ENCODE measurements at regions of chr1 and their contacts with region 1.

Region 1: DNA sequence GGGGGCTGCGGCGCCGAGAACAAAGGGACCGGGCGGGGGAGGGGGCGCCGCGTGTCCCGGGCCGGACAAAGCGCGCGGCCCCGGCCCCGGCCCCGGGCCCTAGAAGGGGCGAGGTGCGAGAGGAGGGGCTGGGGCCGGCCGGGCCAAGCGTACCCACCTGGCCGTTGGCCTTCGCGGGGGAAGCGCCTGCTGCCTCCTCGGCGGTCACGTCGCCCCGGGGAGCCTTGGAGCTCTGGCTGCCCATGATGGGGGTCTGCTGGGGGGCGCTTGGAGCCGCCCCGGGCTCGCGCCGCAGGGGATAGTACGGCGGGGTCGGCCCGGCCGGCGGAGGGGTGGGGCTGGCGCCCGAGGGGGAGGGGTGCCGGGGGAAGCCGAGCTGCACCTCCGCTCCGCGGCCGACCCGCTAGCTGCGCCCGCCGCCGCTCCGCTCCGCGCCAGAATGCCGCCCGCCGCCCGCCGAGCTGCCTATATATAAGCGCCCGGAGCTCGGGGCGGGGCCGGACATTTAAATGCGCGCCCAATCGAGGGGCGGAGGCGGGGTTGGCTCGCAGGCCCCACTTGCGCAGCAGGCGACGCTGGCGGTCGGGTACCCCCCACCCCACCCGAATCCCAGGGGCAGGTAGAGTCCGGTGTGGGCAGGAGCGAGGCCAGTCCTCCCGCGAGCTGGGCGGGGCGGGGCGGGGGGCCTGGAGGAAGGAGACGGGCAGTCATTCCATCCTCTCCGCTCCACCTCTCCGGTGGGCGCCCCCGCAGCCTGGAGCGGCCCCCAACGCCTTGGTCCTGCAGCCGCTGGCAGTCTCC is at the start of gene MARCKSL1:
- DNase-seq: peak; percentile 86
- CTCF ChIP-seq: no peak

Region 2: GRCh38 chr1:32200226-32201010 is 135.6 kb before region 1 on chr1 and contains the start of gene CCDC28B:
- CTCF ChIA-PET with region 1: no interaction called
- POLR2A ChIA-PET with region 1: interaction called, 13 read pairs
- DNase-seq: peak; percentile 78
- CTCF ChIP-seq: no peak

Region 3: DNA sequence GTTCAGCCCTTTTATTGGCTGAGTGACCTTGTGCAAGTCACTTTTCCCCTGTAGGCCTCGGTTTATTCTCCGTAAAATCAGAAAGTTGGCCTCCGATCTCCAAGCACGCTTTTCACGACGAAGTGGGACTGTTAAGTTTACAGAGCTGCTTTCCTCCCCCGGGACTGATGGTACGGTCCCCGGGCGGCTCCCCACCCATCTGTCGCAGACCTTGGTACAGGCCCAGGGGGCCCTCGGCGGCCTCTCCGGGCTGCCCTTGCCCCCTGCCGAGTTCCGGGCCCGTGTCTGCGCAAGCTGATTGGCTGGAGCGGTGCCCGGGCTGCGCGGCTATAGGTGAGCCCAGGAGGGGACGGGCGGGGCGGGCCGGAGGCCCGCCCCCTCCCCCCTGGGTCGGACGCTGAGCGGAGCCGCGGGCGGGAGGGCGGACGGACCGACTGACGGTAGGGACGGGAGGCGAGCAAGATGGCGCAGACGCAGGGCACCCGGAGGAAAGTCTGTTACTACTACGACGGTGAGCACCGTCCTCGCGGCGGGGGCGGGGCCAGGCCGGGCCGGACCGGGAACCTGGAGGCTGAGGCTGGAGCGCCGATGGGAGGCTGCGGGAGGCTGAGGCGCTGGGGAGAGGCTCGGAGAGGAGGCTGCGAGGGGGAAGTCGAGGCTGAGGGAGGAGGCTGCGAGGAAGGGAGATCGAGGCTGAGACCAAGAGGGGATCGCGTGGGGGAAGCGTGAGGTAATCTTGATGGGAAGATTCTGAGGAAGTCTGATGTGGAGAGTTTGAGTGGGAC is 44.1 kb before region 1 on chr1 and contains the start of gene HDAC1:
- CTCF ChIA-PET with region 1: no interaction called
- POLR2A ChIA-PET with region 1: interaction called, 34 read pairs
- DNase-seq: peak; percentile 99
- CTCF ChIP-seq: no peak

Region 4: DNA sequence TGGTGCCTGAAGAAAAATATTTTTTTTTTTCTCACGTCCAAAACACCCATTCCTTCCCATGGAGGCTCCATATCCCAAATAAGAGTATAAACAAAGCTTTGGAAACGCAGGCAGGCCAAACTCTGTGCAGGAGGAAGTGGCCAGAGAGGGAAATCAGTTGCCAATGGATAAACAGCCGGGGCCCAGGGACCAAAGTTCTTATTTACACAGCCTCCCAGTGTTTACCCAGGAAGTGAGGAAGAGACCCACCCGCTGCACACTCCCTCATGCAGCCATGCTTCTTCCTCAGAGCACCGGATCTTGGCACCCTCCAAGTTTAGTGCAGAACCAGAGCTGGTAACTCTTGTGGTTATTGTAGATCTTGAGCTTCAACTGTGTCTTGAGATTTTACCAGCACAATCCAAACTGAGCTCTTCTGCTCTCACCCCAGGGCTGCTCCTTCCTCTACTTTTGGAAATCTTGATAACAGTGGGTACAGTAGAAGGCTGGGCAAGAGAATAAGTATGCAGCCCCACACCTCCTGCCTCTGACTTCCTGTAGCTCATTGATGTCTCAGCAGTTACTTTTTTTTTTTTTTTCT is 14.2 kb before region 1 on chr1:
- CTCF ChIA-PET with region 1: interaction called, 27 read pairs
- POLR2A ChIA-PET with region 1: interaction called, 92 read pairs
- DNase-seq: no peak
- CTCF ChIP-seq: no peak

Region 5: GRCh38 chr1:32361674-32362473 is 25.9 kb after region 1 on chr1:
- CTCF ChIA-PET with region 1: interaction called, 3 read pairs
- POLR2A ChIA-PET with region 1: interaction called, 22 read pairs
- DNase-seq: peak; percentile 43
- CTCF ChIP-seq: no peak

Region 6: DNA sequence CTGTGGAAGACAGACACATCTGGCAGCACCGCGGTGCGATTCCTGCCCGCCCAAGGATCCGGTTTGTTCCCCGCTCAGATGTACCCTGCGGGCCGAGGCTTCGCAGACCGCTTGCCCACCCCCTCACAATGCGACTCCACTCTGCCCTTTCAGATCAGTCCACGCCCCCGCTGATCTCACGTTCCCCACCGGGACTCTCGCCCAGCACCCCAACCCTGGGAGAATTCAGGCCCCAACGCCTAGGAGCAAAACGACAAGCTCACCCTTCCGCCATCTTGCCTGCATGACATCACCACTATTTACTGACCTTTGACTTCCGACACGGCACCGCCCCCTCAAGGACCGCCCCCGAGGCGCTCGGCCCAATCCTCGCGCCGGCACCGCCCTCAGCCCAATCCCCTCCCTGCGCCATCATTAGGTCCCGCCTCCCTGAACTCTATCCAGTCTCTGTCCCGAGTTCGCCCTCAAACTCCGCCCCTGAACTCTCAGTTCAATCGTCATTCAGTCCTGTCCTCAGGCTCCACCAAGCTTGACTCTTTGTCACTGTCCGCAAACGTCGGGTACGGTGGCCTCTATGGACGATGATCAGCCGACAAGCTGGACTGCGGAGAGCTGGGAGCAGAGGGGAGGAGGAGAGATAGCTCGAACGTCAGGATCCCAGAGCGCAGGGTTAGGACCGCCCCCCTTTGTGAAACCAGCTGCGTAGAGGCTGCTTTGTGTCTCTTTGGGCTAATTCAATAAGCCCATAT is 58.3 kb after region 1 on chr1 and contains the start of gene BSDC1:
- CTCF ChIA-PET with region 1: interaction called, 4 read pairs
- POLR2A ChIA-PET with region 1: interaction called, 21 read pairs
- DNase-seq: peak; percentile 99
- CTCF ChIP-seq: no peak

Measured in GM10248 (cell line).